Esophagus muscularis mucosa (tissue), 4 donors: ENCODE measurements at regions of chr10 and their contacts with region 1.

Region 1: GRCh38 chr10:511101-511848 is 178.2 kb downstream of the DIP2C start:
- DNase-seq: peak; percentile 98
- H3K4me3 ChIP-seq: peak overlapping the region in 2 of 4 donors; percentile 9 to 13
- H3K27ac ChIP-seq: peak overlapping the region; percentile 58 to 85 (median 74)
- H3K4me1 ChIP-seq: peaks cover 35 to 84% (median 70%) of the 10 kb centered on the region in 4 donors
- H3K27me3 ChIP-seq: no peaks in the 10 kb centered on the region
- CTCF ChIP-seq: peak; percentile 95 to 98 (median 97)
- EP300 ChIP-seq: no peak
- POLR2A ChIP-seq: no peak

Region 2: GRCh38 chr10:451021-451471 is 60.2 kb before region 1 on chr10:
- intact Hi-C with region 1: loop called (anchors 5 kb)
- DNase-seq: no peak
- H3K4me3 ChIP-seq: no peak overlapping the region
- H3K27ac ChIP-seq: peak overlapping the region in 2 of 4 donors; percentile 34 to 85
- H3K4me1 ChIP-seq: peaks cover 23 to 48% (median 43%) of the 10 kb centered on the region in 4 donors
- H3K27me3 ChIP-seq: no peaks in the 10 kb centered on the region
- CTCF ChIP-seq: no peak
- EP300 ChIP-seq: no peak
- POLR2A ChIP-seq: no peak

Region 3: GRCh38 chr10:689433-690371 is 178.4 kb after region 1 on chr10 and contains the start of gene DIP2C:
- intact Hi-C with region 1: loop called (anchors 2 kb)
- DNase-seq: peak; percentile 92
- H3K4me3 ChIP-seq: peak within 1 kb of the TSS; percentile 76 to 92 (median 86)
- H3K27ac ChIP-seq: peak within 1 kb of the TSS; percentile 85 to 98 (median 96)
- H3K4me1 ChIP-seq: peaks cover 14 to 56% (median 48%) of the 10 kb centered on the region in 4 donors
- H3K27me3 ChIP-seq: no peaks in the 10 kb centered on the region
- CTCF ChIP-seq: no peak
- EP300 ChIP-seq: no peak
- POLR2A ChIP-seq: peak; percentile 14
- total RNA-seq, gene DIP2C: 38.6 to 66.4 (median 55.7) TPM

Region 4: DNA sequence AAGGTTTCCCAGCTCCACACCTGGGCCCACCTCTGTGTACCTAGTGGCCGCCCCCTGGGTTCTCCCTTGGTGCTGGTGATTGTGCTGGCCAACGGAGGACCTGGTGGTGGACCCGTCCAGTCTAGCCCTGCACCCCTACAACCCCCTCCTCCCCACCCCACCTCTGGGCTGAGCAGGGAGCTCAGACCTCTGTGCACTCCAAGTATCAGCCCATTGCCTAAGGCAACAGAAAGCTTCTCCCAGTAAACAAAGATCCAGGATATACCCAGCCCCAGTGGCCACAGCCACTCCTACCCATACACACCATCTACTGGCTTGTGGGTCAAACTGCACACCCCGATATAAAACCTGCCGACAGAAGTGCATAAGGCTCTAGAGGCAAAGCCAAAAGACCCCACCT is 283.2 kb after region 1 on chr10:
- intact Hi-C with region 1: loop called (anchors 5 kb)
- DNase-seq: no peak
- H3K4me3 ChIP-seq: no peak overlapping the region
- H3K27ac ChIP-seq: no peak overlapping the region
- H3K4me1 ChIP-seq: peaks cover 0 to 8% (median 4%) of the 10 kb centered on the region in 4 donors
- H3K27me3 ChIP-seq: no peaks in the 10 kb centered on the region
- CTCF ChIP-seq: peak in 1 of 3 experiments; percentile 36
- EP300 ChIP-seq: no peak
- POLR2A ChIP-seq: no peak